Caco-2 (cell line): ENCODE measurements at regions of chr18 and their contacts with region 1.

Region 1: GRCh38 chr18:5237723-5238370 is 40.8 kb upstream of the AKAIN1 start:
- DNase-seq: peak; percentile 83 to 93
- H3K4me3 ChIP-seq: peak overlapping the region; percentile 87
- H3K4me3 Mint-ChIP-seq: peak overlapping the region; percentile 93
- H3K27ac Mint-ChIP-seq: peak overlapping the region; percentile 98
- H3K4me1 ChIP-seq: peaks cover 5% of the 10 kb centered on the region; the same call in 1 of the 2 replicates
- H3K4me1 Mint-ChIP-seq: no peaks in the 10 kb centered on the region
- H3K27me3 ChIP-seq: no peaks in the 10 kb centered on the region
- H3K27me3 Mint-ChIP-seq: no peaks in the 10 kb centered on the region
- CTCF ChIP-seq: peak; percentile 45 to 46

Region 2: DNA sequence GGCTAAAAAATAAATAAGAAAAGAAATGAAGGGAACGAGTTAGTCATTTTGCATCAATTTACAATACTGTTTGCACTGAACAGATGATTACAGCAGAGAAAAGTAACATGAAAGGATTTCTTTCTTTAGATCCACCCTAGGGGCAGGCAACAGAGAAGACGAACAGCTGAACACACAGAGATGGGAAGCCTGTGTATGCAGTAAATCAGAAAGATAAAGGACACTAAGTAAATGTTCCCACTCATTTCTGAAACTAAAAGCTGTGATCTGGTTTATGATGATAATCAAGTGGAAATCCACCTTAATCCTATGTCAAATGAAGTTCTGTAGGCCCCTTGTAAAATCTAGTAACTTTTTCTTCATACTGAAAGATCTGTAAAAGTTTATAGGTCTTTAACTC is 95.0 kb before region 1 on chr18:
- CTCF ChIA-PET with region 1: interaction called, 3 read pairs
- POLR2A ChIA-PET with region 1: interaction called, 4 read pairs
- intact Hi-C with region 1: loop called (anchors 5 kb)
- DNase-seq: peak; percentile 68 to 71
- H3K4me3 ChIP-seq: no peak overlapping the region
- H3K4me3 Mint-ChIP-seq: no peak overlapping the region
- H3K27ac Mint-ChIP-seq: no peak overlapping the region
- H3K4me1 ChIP-seq: peaks cover 22% of the 10 kb centered on the region
- H3K4me1 Mint-ChIP-seq: no peaks in the 10 kb centered on the region
- H3K27me3 ChIP-seq: no peaks in the 10 kb centered on the region
- H3K27me3 Mint-ChIP-seq: no peaks in the 10 kb centered on the region
- CTCF ChIP-seq: no peak

Region 3: GRCh38 chr18:5167831-5168230 is 70.0 kb before region 1 on chr18:
- CTCF ChIA-PET with region 1: no interaction called
- POLR2A ChIA-PET with region 1: no interaction called
- intact Hi-C with region 1: no loop called
- DNase-seq: no peak
- H3K4me3 ChIP-seq: no peak overlapping the region
- H3K4me3 Mint-ChIP-seq: no peak overlapping the region
- H3K27ac Mint-ChIP-seq: no peak overlapping the region
- H3K4me1 ChIP-seq: no peaks in the 10 kb centered on the region
- H3K4me1 Mint-ChIP-seq: no peaks in the 10 kb centered on the region
- H3K27me3 ChIP-seq: no peaks in the 10 kb centered on the region
- H3K27me3 Mint-ChIP-seq: peaks cover 4% of the 10 kb centered on the region
- CTCF ChIP-seq: no peak

Region 4: GRCh38 chr18:5197032-5197434 is 40.8 kb before region 1 on chr18 and contains the start of gene AKAIN1:
- CTCF ChIA-PET with region 1: no interaction called
- POLR2A ChIA-PET with region 1: no interaction called
- intact Hi-C with region 1: loop called (anchors 2 kb)
- DNase-seq: peak; percentile 43 to 71
- H3K4me3 ChIP-seq: no peak within 1 kb of the TSS
- H3K4me3 Mint-ChIP-seq: peak within 1 kb of the TSS; percentile 66
- H3K27ac Mint-ChIP-seq: no peak within 1 kb of the TSS
- H3K4me1 ChIP-seq: no peaks in the 10 kb centered on the region
- H3K4me1 Mint-ChIP-seq: peaks cover 6% of the 10 kb centered on the region
- H3K27me3 ChIP-seq: no peaks in the 10 kb centered on the region
- H3K27me3 Mint-ChIP-seq: peaks cover 12% of the 10 kb centered on the region
- CTCF ChIP-seq: no peak
- total RNA-seq, gene AKAIN1: not detected in 2 replicates

Region 5: GRCh38 chr18:5295981-5296705 is 58.3 kb after region 1 on chr18:
- CTCF ChIA-PET with region 1: interaction called, 5 read pairs
- POLR2A ChIA-PET with region 1: interaction called, 58 read pairs
- intact Hi-C with region 1: loop called (anchors 1 kb)
- DNase-seq: peak; percentile 94 to 95
- H3K4me3 ChIP-seq: peak overlapping the region; percentile 89
- H3K4me3 Mint-ChIP-seq: peak overlapping the region; percentile 75
- H3K27ac Mint-ChIP-seq: peak overlapping the region; percentile 72
- H3K4me1 ChIP-seq: 0 out of 2 replicates have a peak, but pooled peaks cover 4% of the 10 kb centered on the region
- H3K4me1 Mint-ChIP-seq: peaks cover 9% of the 10 kb centered on the region
- H3K27me3 ChIP-seq: no peaks in the 10 kb centered on the region
- H3K27me3 Mint-ChIP-seq: no peaks in the 10 kb centered on the region
- CTCF ChIP-seq: no peak